Calu3 (cell line): ENCODE measurements at regions of chr1 and their contacts with region 1.

Region 1: DNA sequence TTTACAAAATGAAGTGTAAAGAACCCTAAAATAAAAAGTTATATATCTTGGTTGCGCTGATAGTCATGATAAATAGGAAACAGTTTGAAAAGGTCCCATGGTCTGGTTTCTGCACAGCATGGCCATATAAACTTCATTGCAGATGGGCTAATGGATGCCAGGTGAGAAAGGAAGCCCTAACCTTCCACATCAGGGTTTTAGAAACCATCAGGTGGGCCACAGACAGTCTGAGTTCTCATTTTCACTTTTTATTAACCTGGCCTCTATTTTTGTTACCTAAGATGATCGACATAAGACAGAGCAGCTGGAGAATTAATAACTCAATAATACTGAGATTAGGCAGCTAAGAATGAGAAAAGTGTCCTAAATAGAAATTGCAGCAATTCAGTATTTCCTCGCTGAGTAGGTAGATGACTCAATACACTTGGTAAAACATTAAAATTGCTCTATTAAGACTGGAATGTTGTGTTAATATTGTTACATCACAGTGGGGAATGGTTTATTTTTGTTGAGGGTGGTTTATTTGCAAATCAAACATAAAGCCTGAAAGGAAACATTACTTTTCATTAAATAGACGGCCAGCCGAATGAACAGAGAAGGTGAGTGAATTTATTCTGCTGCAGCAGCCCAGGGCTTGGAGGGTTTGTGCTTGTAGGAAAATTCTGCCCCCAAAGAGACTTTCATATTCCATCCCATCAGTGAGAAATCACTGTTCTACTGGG is 21.1 kb downstream of the C1orf21 start:
- DNase-seq: no peak
- H3K4me3 Mint-ChIP-seq: peak overlapping the region; percentile 53
- H3K27ac Mint-ChIP-seq: peak overlapping the region; percentile 59
- H3K4me1 Mint-ChIP-seq: peaks cover 47% of the 10 kb centered on the region
- H3K27me3 Mint-ChIP-seq: no peaks in the 10 kb centered on the region
- CTCF ChIP-seq: no peak

Region 2: DNA sequence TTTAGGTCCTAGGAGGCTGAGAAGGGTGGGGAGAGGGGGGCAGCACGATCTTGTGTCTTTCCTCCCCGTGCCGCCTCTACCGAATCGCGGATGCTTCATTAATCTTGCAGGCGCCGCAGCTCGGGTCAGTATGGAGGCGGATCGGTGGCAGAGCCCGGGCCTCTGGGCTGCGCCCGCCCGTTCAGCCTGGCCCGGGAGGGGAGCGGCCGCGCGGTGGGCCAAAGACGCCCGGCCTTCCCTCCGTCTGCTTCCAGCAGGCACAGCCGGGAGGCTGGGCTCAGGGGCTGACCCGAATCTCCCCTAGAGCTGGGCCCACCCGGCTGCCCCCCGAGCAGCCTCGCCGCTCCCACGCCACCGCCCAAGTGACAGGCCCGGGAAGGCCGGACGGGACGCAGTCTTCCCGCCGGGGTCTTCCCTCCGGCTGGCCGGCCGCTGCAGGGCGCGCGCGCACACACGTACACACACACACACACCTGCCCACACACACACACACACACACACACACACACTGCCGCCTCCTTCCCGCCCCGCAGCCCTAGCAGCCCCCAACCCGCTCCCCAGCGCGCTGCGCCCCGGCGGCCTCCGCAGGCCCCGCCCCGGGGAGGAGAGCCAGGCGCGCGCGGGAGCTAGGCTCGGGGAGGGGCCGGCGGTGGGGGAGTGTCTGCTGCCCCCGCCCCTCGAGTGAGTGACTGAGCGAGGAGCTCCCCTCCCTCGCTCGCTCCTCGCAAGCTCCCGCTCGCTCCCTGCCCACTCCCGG is 21.5 kb before region 1 on chr1 and contains the start of gene C1orf21:
- CTCF ChIA-PET with region 1: interaction called, 11 read pairs
- intact Hi-C with region 1: no loop called
- DNase-seq: peak; percentile 93
- H3K4me3 Mint-ChIP-seq: peak within 1 kb of the TSS; percentile 76
- H3K27ac Mint-ChIP-seq: peak within 1 kb of the TSS; percentile 19
- H3K4me1 Mint-ChIP-seq: peaks cover 19% of the 10 kb centered on the region
- H3K27me3 Mint-ChIP-seq: no peaks in the 10 kb centered on the region
- CTCF ChIP-seq: no peak
- total RNA-seq, gene C1orf21: 16.9 and 20.6 TPM in 2 replicates